ENCODE measurements at regions of chr17 and their contacts with region 1.

Region 1: DNA sequence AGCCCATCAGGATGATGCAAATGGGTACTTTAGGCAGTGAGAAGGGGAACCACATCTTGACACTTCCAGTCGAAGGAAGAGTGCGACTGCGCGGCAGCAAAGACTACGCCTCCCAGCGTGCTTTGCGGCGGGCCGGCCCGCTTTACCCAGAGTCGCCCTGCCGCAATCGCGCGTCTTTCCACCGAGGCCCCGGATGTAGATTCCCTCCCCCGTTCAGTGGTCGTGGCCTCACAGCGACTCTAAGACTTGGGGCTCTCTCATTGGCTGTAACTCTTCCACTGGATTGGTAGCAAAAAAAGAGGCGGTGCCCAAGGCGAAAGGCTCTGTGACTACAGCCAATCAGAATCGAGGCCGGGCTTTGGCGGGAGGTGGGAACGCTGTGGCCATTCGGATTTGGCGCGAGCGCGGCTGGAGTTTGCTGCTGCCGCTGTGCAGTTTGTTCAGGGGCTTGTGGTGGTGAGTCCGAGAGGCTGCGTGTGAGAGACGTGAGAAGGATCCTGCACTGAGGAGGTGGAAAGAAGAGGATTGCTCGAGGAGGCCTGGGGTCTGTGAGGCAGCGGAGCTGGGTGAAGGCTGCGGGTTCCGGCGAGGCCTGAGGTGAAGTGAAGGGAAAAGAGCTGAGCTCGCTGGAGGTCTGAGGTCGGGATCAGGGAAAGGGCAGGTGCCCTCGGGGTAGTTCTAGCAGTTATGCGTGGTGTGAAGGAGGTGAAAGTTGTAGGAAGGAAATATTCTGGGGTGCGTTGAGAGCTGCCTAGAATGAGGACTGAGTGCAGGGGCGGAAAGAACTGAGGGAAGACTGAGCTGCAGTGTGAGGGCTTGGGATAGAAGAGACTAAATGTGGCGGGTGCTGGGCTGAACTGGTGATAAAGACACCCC is at the start of gene CDC6:
- DNase-seq: peak; percentile 98
- H3K4me3 Mint-ChIP-seq: peak within 1 kb of the TSS; percentile 99
- H3K27ac Mint-ChIP-seq: peak within 1 kb of the TSS; percentile 98
- H3K4me1 Mint-ChIP-seq: peaks cover 39% of the 10 kb centered on the region
- H3K27me3 Mint-ChIP-seq: no peaks in the 10 kb centered on the region
- total RNA-seq, gene CDC6: 130 and 135 TPM in 2 replicates

Region 2: GRCh38 chr17:40203131-40203530 is 84.6 kb before region 1 on chr17:
- intact Hi-C with region 1: loop called (anchors 1 kb)
- DNase-seq: no peak
- H3K4me3 Mint-ChIP-seq: no peak overlapping the region
- H3K27ac Mint-ChIP-seq: no peak overlapping the region
- H3K4me1 Mint-ChIP-seq: no peaks in the 10 kb centered on the region
- H3K27me3 Mint-ChIP-seq: peaks cover 18% of the 10 kb centered on the region

Region 3: GRCh38 chr17:40331743-40332641 is 44.3 kb after region 1 on chr17:
- intact Hi-C with region 1: no loop called
- DNase-seq: no peak
- H3K4me3 Mint-ChIP-seq: peak overlapping the region; percentile 50
- H3K27ac Mint-ChIP-seq: peak overlapping the region; percentile 79
- H3K4me1 Mint-ChIP-seq: peaks cover 80% of the 10 kb centered on the region
- H3K27me3 Mint-ChIP-seq: no peaks in the 10 kb centered on the region

Region 4: DNA sequence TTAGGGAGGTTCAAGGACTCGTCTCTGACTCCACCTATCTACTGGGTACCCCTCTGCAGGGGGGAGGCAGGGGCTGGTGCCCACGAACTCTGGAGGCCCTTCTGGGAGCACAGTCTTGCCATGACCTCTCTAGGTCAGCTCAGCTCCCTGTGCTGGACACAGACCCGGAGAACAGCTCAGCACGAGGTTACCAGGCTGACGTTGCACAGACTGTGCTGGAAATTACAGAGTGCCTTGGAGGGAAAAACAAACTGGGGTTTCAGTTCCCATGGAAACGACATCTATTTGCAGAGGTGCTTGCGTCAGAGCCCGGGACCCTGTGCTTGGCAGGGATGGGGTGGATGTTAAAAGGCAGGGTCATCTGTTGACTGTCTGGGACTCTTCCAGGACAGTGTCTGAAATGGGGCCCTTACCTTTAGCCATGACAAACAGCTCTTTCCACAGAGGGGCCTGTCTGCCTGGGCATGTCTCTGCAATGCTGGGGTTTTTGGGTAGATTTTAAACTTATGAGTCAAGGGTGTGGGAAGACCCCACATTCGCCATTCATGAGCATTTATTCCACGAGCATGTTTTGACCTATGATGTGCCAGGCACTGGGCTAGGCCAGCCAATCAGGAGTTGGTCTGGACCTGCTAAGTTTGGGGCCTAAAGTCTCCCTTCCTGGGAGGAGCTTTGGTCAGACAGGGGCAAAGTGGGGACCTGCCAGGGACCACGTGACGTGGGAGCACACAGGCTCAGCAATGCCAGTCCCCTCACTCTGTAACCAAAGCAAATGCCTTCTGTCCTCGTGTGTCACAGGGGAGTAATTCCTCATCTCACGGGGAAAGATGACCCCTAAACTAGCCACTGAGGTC is 255.1 kb after region 1 on chr17:
- intact Hi-C with region 1: loop called (anchors 5 kb)
- DNase-seq: no peak
- H3K4me3 Mint-ChIP-seq: peak overlapping the region; percentile 69
- H3K27ac Mint-ChIP-seq: peak overlapping the region; percentile 88
- H3K4me1 Mint-ChIP-seq: peaks cover 75% of the 10 kb centered on the region
- H3K27me3 Mint-ChIP-seq: peaks cover 10% of the 10 kb centered on the region